ENCODE measurements at regions of chr12 and their contacts with region 1.

Region 1: GRCh38 chr12:91811481-91812287 is 334.0 kb downstream of the BTG1 start:
- DNase-seq: peak; percentile 22
- H3K4me3 ChIP-seq: peak overlapping the region in 1 of 2 experiments; percentile 24; a peak in 1 of 4 replicates
- H3K27ac ChIP-seq: no peak overlapping the region
- H3K4me1 ChIP-seq: no peaks in the 10 kb centered on the region; a peak in 1 of 4 replicates
- H3K27me3 ChIP-seq: no peaks in the 10 kb centered on the region
- CTCF ChIP-seq: peak; percentile 96
- EP300 ChIP-seq: no peak
- RAD21 ChIP-seq: peak; percentile 72

Region 2: DNA sequence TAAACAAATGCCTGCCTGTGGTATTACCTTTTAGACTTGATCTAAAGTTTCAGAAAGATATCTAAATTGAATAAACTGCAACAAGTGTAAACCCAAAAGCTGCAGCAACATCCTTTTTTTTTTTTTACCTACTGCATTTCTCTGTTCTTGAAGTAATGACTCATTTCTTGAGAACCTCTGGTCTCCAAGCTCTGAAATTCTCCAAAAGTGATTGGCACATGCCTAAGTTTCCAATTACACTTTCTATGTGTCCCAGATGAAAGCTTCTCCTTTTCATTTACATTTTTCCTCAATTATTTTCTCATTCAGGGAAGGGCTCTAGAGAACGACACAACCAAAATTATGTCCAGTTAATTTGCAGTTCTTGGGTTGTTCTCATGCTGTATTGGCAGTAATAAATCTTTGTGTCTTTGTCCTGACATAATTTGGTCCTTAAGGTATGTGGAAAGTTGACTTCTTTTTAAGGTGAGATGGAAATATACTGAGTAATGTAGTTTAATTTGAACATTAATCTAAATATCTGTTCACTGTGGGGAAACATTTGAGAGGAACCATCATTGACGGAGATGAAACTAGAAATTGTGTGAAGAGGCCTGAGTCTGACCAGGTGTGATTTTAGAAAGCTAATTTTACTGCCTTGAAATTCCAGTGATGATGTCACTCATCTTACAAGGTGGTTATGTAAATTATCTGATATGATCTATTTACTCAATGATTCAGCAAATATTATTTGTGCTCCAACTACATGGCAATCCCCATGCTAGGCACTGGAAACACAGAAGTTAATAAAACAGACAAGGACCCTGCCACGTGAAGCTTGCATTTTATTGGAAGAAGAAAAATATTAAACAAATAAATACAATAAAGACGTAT is 193.6 kb before region 1 on chr12:
- CTCF ChIA-PET with region 1: no interaction called
- POLR2A ChIA-PET with region 1: no interaction called
- DNase-seq: no peak
- H3K4me3 ChIP-seq: no peak overlapping the region
- H3K27ac ChIP-seq: no peak overlapping the region
- H3K4me1 ChIP-seq: peaks cover 0 to 2% of the 10 kb centered on the region in 2 experiments; a peak in 1 of 4 replicates
- H3K27me3 ChIP-seq: no peaks in the 10 kb centered on the region
- CTCF ChIP-seq: no peak
- EP300 ChIP-seq: no peak
- RAD21 ChIP-seq: no peak

Region 3: GRCh38 chr12:91695951-91696350 is 115.7 kb before region 1 on chr12:
- CTCF ChIA-PET with region 1: no interaction called
- POLR2A ChIA-PET with region 1: no interaction called
- DNase-seq: peak; percentile 32
- H3K4me3 ChIP-seq: no peak overlapping the region
- H3K27ac ChIP-seq: peak overlapping the region in 1 of 2 experiments; percentile 50; a peak in 1 of 4 replicates
- H3K4me1 ChIP-seq: no peaks in the 10 kb centered on the region
- H3K27me3 ChIP-seq: no peaks in the 10 kb centered on the region
- CTCF ChIP-seq: no peak
- EP300 ChIP-seq: 0 out of 4 replicates have a peak, but pooled peaks of 1 of the 2 experiments have one; percentile 48
- RAD21 ChIP-seq: peak; percentile 50

Region 4: DNA sequence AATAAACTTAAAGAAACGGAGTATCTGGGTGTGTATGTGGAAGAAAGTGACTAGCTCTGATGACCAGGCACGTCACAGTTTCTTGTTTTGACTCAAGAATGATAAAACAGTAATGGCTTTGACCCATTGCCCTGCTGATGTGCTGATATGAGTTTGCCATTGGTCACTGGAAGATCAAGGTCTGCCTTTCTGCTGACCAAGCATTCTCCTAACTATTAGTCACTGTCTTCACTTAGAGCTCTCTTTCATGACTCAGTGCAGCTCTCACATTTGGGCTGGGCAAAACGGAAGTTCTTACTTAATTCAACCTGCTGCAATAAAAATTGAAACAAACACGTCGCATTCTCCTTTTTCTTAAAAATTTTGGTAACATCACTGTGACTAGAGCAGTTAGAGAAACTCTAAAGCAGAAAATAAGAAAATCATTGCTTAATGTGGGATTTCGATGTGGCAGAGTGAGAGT is 32.7 kb before region 1 on chr12:
- CTCF ChIA-PET with region 1: interaction called, 12 read pairs
- POLR2A ChIA-PET with region 1: no interaction called
- DNase-seq: no peak
- H3K4me3 ChIP-seq: no peak overlapping the region
- H3K27ac ChIP-seq: no peak overlapping the region; a peak in 1 of 4 replicates
- H3K4me1 ChIP-seq: peaks cover 4 to 18% of the 10 kb centered on the region in 2 experiments; a peak in 3 of 4 replicates
- H3K27me3 ChIP-seq: no peaks in the 10 kb centered on the region
- CTCF ChIP-seq: no peak
- EP300 ChIP-seq: peak in 1 of 2 experiments; percentile 52; a peak in 1 of 4 replicates
- RAD21 ChIP-seq: no peak

Region 5: GRCh38 chr12:91801048-91801447 is 10.6 kb before region 1 on chr12:
- CTCF ChIA-PET with region 1: interaction called, 24 read pairs
- POLR2A ChIA-PET with region 1: no interaction called
- DNase-seq: no peak
- H3K4me3 ChIP-seq: no peak overlapping the region
- H3K27ac ChIP-seq: no peak overlapping the region
- H3K4me1 ChIP-seq: no peaks in the 10 kb centered on the region
- H3K27me3 ChIP-seq: no peaks in the 10 kb centered on the region
- CTCF ChIP-seq: no peak
- EP300 ChIP-seq: no peak
- RAD21 ChIP-seq: no peak

Region 6: GRCh38 chr12:91825999-91826398 is 14.3 kb after region 1 on chr12:
- CTCF ChIA-PET with region 1: interaction called, 22 read pairs
- POLR2A ChIA-PET with region 1: no interaction called
- DNase-seq: no peak
- H3K4me3 ChIP-seq: no peak overlapping the region
- H3K27ac ChIP-seq: peak overlapping the region in 1 of 2 experiments; percentile 32; a peak in 2 of 4 replicates
- H3K4me1 ChIP-seq: no peaks in the 10 kb centered on the region; a peak in 1 of 4 replicates
- H3K27me3 ChIP-seq: no peaks in the 10 kb centered on the region
- CTCF ChIP-seq: no peak
- EP300 ChIP-seq: peak in 1 of 2 experiments; percentile 76; a peak in 2 of 4 replicates
- RAD21 ChIP-seq: 0 out of 2 replicates have a peak, but pooled peaks have one; percentile 3

Region 7: GRCh38 chr12:91910871-91911388 is 99.2 kb after region 1 on chr12:
- CTCF ChIA-PET with region 1: no interaction called
- POLR2A ChIA-PET with region 1: no interaction called
- DNase-seq: no peak
- H3K4me3 ChIP-seq: no peak overlapping the region
- H3K27ac ChIP-seq: no peak overlapping the region
- H3K4me1 ChIP-seq: no peaks in the 10 kb centered on the region
- H3K27me3 ChIP-seq: no peaks in the 10 kb centered on the region
- CTCF ChIP-seq: no peak
- EP300 ChIP-seq: no peak
- RAD21 ChIP-seq: no peak

Region 8: DNA sequence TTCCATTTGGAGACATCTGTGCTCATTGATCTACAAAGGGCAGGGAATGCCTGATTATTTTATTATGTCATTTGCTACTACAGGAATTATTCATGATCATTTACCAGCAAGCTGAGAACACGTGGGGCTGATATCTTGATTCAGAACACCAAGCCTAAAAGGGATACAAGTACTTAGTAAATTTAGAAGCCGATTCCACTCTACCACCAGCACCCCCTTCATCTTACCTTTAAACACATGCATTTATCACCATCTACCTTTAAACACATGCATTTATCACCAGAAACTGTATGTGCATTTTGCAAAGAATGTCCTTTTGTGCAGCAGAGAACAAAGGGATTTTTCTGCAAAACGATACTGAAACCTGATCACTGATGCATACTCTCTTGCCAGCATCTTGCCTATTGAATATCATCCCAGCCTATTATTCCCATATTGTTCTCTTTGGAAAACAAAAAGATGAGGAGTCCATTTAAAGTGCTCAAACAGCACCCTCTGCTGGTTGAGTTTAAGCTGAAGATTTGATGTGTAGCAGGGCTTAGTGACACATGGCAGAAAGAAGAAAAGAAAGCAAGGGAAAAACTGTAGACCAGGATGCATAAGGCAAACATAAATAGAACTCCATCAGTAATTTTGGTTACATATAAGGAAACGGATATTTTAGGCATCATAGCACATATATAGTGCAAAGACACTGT is 758.5 kb after region 1 on chr12:
- CTCF ChIA-PET with region 1: interaction called, 12 read pairs
- POLR2A ChIA-PET with region 1: no interaction called
- DNase-seq: peak; percentile 49
- H3K4me3 ChIP-seq: no peak overlapping the region; a peak in 1 of 4 replicates
- H3K27ac ChIP-seq: peak overlapping the region in 1 of 2 experiments; percentile 60; a peak in 2 of 4 replicates
- H3K4me1 ChIP-seq: no peaks in the 10 kb centered on the region; a peak in 2 of 4 replicates
- H3K27me3 ChIP-seq: no peaks in the 10 kb centered on the region
- CTCF ChIP-seq: peak; percentile 86
- EP300 ChIP-seq: no peak
- RAD21 ChIP-seq: peak; percentile 94

Measured in SK-N-SH (cell line).